SK-N-SH (cell line): ENCODE measurements at regions of chr15 and their contacts with region 1.

Region 1: GRCh38 chr15:31128919-31129768 is 27.6 kb upstream of the TRPM1 start:
- DNase-seq: peak; percentile 78
- H3K4me3 ChIP-seq: peak overlapping the region in 1 of 2 experiments; percentile 42; a peak in 1 of 4 replicates
- H3K27ac ChIP-seq: no peak overlapping the region
- H3K4me1 ChIP-seq: peaks cover 0 to 13% of the 10 kb centered on the region in 2 experiments; a peak in 1 of 4 replicates
- H3K27me3 ChIP-seq: no peaks in the 10 kb centered on the region
- CTCF ChIP-seq: peak; percentile 98
- EP300 ChIP-seq: no peak
- RAD21 ChIP-seq: peak; percentile 94

Region 2: GRCh38 chr15:30885814-30886213 is 243.3 kb before region 1 on chr15:
- CTCF ChIA-PET with region 1: interaction called, 11 read pairs
- POLR2A ChIA-PET with region 1: no interaction called
- DNase-seq: no peak
- H3K4me3 ChIP-seq: no peak overlapping the region
- H3K27ac ChIP-seq: no peak overlapping the region
- H3K4me1 ChIP-seq: no peaks in the 10 kb centered on the region
- H3K27me3 ChIP-seq: no peaks in the 10 kb centered on the region
- CTCF ChIP-seq: no peak
- EP300 ChIP-seq: no peak
- RAD21 ChIP-seq: no peak

Region 3: DNA sequence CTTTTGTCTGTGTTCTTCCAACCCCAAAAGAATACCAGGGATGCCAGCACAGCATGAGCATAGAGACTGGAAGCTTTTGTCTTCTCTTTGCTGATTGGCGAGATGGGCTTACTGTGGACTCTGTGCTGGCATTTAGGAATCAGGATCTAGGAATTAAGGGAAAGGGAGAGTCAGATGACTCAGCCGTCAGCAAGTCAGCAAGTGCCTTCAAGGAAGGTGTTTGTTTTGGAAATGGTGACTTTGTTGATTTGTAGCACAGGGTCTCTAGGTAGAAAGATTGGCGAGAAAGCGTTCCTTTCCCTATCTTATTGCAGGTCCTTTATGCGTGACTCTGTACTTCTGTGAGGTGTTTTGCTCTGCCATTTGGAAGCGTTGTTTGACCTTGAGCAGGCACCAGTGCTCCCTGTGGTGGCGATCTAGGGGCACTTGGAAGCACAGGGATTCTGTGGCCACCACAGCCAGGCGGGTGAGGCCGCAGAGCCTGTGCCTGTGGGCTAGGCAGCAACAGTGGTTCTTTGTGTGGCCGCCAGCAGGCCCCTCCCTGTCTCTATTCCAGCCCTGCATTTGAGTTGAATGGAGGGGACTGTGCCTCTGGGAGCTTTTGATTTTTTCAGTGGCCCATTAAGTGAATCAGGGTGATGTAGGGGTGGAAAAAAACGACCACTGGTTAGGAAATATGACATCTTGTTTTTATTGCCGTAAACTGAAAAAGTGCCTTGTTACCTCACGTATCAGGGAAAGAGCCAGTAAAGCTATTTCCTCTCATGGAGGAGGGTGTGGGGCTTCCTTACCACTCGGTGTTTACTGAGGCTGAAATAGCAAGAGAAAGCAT is 206.4 kb before region 1 on chr15:
- CTCF ChIA-PET with region 1: interaction called, 21 read pairs
- POLR2A ChIA-PET with region 1: no interaction called
- DNase-seq: no peak
- H3K4me3 ChIP-seq: no peak overlapping the region
- H3K27ac ChIP-seq: peak overlapping the region in 1 of 2 experiments; percentile 79; a peak in 2 of 4 replicates
- H3K4me1 ChIP-seq: peaks cover 0 to 31% of the 10 kb centered on the region in 2 experiments; a peak in 2 of 4 replicates
- H3K27me3 ChIP-seq: no peaks in the 10 kb centered on the region
- CTCF ChIP-seq: no peak
- EP300 ChIP-seq: no peak
- RAD21 ChIP-seq: no peak

Region 4: DNA sequence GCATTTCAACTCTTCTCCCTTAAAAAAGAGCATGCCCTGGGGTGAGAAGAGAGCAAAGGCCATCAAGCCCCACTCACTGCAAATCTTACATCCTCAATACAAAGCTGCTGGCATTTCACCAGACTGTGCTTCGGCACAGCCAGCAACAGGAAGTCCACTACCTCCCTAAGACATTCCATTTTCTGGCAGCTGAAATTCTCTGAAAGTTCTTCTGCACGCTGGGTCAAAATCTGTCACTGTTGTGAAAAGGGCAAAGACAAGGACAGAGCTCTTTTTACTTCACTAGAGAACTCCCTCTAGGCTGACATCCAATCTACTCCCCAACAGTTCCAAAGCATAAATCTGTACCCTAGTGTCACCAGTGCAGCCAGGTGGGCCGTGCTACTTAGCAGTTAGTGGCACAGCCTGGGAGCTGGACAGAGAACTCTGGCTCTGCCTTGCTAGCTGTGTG is 144.0 kb before region 1 on chr15:
- CTCF ChIA-PET with region 1: interaction called, 29 read pairs
- POLR2A ChIA-PET with region 1: no interaction called
- DNase-seq: peak; percentile 25
- H3K4me3 ChIP-seq: peak overlapping the region; percentile 1 to 27; a peak in 1 of 4 replicates
- H3K27ac ChIP-seq: peak overlapping the region; percentile 46 to 53
- H3K4me1 ChIP-seq: peaks cover 6 to 20% of the 10 kb centered on the region in 2 experiments
- H3K27me3 ChIP-seq: no peaks in the 10 kb centered on the region
- CTCF ChIP-seq: no peak
- EP300 ChIP-seq: no peak
- RAD21 ChIP-seq: no peak

Region 5: GRCh38 chr15:31081588-31082250 is 47.4 kb before region 1 on chr15:
- CTCF ChIA-PET with region 1: interaction called, 17 read pairs
- POLR2A ChIA-PET with region 1: no interaction called
- DNase-seq: no peak
- H3K4me3 ChIP-seq: no peak overlapping the region
- H3K27ac ChIP-seq: no peak overlapping the region
- H3K4me1 ChIP-seq: peaks cover 0 to 18% of the 10 kb centered on the region in 2 experiments; a peak in 1 of 4 replicates
- H3K27me3 ChIP-seq: no peaks in the 10 kb centered on the region
- CTCF ChIP-seq: no peak
- EP300 ChIP-seq: no peak
- RAD21 ChIP-seq: no peak

Region 6: GRCh38 chr15:31116423-31117030 is 12.6 kb before region 1 on chr15:
- CTCF ChIA-PET with region 1: interaction called, 40 read pairs
- POLR2A ChIA-PET with region 1: no interaction called
- DNase-seq: no peak
- H3K4me3 ChIP-seq: no peak overlapping the region
- H3K27ac ChIP-seq: no peak overlapping the region
- H3K4me1 ChIP-seq: no peaks in the 10 kb centered on the region
- H3K27me3 ChIP-seq: no peaks in the 10 kb centered on the region
- CTCF ChIP-seq: no peak
- EP300 ChIP-seq: no peak
- RAD21 ChIP-seq: no peak

Region 7: GRCh38 chr15:31488426-31489204 is 359.5 kb after region 1 on chr15:
- CTCF ChIA-PET with region 1: interaction called, 28 read pairs
- POLR2A ChIA-PET with region 1: no interaction called
- DNase-seq: peak; percentile 92
- H3K4me3 ChIP-seq: no peak overlapping the region
- H3K27ac ChIP-seq: no peak overlapping the region
- H3K4me1 ChIP-seq: peaks cover 3 to 10% of the 10 kb centered on the region in 2 experiments; a peak in 1 of 4 replicates
- H3K27me3 ChIP-seq: no peaks in the 10 kb centered on the region
- CTCF ChIP-seq: peak; percentile 84
- EP300 ChIP-seq: no peak
- RAD21 ChIP-seq: peak; percentile 89